ENCODE measurements at regions of chr11 and their contacts with region 1.

Region 1: DNA sequence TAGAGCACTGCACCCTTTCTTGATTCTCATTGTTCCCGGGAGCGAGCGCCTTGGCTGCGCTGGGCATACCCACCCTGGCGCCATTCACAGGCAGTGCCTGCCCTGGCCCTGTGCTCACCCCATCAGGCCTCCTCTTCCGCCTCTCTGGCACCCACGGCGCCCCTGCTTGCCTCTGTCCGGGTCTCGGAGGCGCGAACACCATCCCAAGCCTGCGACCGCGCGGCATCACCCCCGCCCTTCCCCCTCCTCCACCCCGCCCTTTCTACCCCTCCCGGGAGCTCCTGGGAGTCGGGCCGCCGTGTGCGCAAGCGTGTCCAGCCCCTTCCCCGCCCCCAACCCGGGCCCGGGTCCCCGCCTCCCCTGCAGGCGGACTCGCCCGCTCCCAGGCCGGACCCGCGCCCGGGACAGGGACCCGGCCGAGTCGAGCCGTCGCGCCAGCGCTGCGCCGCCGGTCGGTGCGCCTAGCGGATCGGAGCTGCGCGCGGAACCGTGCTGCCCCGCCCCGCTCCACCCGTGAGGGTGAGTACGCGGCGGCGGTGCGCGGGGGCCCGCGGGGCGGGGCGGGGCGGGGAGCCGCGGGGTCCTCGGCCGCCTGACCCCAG is at the start of gene ST3GAL4:
- DNase-seq: peak; percentile 75
- ATAC-seq: peak; percentile 77
- H3K4me3 Mint-ChIP-seq: peak within 1 kb of the TSS; percentile 97
- H3K27ac Mint-ChIP-seq: peak within 1 kb of the TSS; percentile 92
- H3K4me1 Mint-ChIP-seq: peaks cover 37% of the 10 kb centered on the region
- H3K27me3 Mint-ChIP-seq: no peaks in the 10 kb centered on the region
- CTCF ChIP-seq: no peak
- total RNA-seq, gene ST3GAL4: 10.7 to 11.7 TPM

Region 2: DNA sequence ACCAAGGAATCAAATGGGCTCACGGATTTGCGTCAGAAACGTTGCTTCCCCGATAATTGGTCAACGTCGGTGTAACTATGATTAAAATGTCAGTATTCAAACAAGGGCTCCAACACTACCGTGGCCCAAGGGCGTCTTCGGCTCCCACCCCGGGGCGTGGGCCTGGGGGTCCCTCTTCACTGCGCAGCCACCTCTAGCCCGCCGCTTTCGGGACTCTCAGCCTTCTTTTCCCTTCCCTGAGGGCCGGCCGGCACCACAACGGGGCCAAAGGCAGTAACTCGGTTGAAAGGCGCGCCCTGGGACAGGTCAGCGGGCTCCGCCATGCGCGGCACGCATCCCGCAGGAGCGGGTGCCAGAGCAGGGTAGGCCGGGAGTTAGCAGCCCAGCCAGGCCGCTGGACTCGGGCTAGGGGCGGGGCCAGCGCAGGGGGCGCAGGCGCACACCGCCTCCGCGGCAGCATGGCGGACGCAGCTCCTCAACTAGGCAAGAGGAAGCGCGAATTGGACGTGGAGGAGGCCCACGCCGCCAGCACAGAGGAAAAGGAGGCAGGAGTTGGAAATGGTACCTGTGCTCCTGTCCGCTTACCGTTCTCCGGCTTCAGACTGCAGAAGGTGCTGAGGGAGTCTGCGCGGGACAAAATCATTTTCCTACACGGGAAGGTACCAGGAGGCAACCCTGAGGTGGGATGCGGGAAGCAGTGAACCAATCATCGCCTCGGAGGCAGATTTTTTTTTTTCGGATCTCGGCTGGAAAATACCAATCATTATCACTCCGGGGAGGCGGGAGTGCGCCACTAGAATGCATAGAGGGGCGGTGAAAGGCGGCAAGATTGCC is 51.6 kb before region 1 on chr11 and contains the start of gene DCPS:
- CTCF ChIA-PET with region 1: no interaction called
- POLR2A ChIA-PET with region 1: interaction called, 10 read pairs
- intact Hi-C with region 1: no loop called
- DNase-seq: peak; percentile 88
- ATAC-seq: peak; percentile 95
- H3K4me3 Mint-ChIP-seq: peak within 1 kb of the TSS; percentile 90
- H3K27ac Mint-ChIP-seq: peak within 1 kb of the TSS; percentile 99
- H3K4me1 Mint-ChIP-seq: peaks cover 23% of the 10 kb centered on the region
- H3K27me3 Mint-ChIP-seq: no peaks in the 10 kb centered on the region
- CTCF ChIP-seq: no peak
- total RNA-seq, gene DCPS: 17.2 to 18.8 TPM

Region 3: GRCh38 chr11:126310228-126310991 is 45.0 kb before region 1 on chr11:
- CTCF ChIA-PET with region 1: interaction called, 20 read pairs
- POLR2A ChIA-PET with region 1: interaction called, 7 read pairs
- intact Hi-C with region 1: loop called (anchors 5 kb)
- DNase-seq: peak; percentile 75
- ATAC-seq: peak; percentile 71
- H3K4me3 Mint-ChIP-seq: no peak overlapping the region
- H3K27ac Mint-ChIP-seq: no peak overlapping the region
- H3K4me1 Mint-ChIP-seq: peaks cover 17% of the 10 kb centered on the region
- H3K27me3 Mint-ChIP-seq: no peaks in the 10 kb centered on the region
- CTCF ChIP-seq: peak; percentile 76

Region 4: GRCh38 chr11:126318574-126319373 is 36.7 kb before region 1 on chr11:
- CTCF ChIA-PET with region 1: interaction called, 6 read pairs
- POLR2A ChIA-PET with region 1: interaction called, 13 read pairs
- intact Hi-C with region 1: loop called (anchors 5 kb)
- DNase-seq: peak; percentile 55
- ATAC-seq: peak; percentile 77
- H3K4me3 Mint-ChIP-seq: peak overlapping the region; percentile 61
- H3K27ac Mint-ChIP-seq: peak overlapping the region; percentile 87
- H3K4me1 Mint-ChIP-seq: peaks cover 32% of the 10 kb centered on the region
- H3K27me3 Mint-ChIP-seq: no peaks in the 10 kb centered on the region
- CTCF ChIP-seq: no peak

Region 5: DNA sequence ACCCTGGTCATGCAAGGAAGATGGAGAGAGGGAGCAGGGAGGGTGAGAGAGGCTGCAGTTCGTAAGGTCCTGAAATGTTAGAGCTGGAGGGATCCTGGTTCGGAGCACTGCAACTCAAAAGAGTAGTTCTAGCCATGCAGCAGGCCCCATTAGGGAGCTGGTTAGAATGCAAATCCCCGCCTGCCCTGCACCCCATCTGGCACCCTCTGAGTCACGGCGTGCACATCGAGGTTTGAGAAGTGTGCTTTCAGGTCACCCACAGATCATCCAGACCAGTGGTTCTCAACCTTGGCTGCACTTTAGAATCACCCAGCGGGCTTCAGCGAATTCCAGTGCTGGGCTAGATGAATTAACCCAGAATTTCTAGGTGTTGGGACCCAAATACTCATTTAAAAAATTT is 48.2 kb after region 1 on chr11:
- CTCF ChIA-PET with region 1: no interaction called
- POLR2A ChIA-PET with region 1: no interaction called
- intact Hi-C with region 1: no loop called
- DNase-seq: no peak
- ATAC-seq: no peak
- H3K4me3 Mint-ChIP-seq: no peak overlapping the region
- H3K27ac Mint-ChIP-seq: no peak overlapping the region
- H3K4me1 Mint-ChIP-seq: no peaks in the 10 kb centered on the region
- H3K27me3 Mint-ChIP-seq: no peaks in the 10 kb centered on the region
- CTCF ChIP-seq: no peak